MCF 10A (cell line): ENCODE measurements at regions of chr7 and their contacts with region 1.

Region 1: GRCh38 chr7:141014524-141015395 is at the start of gene MRPS33:
- DNase-seq: peak; percentile 95
- H3K4me3 Mint-ChIP-seq: peak within 1 kb of the TSS; percentile 85
- H3K27ac Mint-ChIP-seq: peak within 1 kb of the TSS; percentile 97
- H3K4me1 Mint-ChIP-seq: peaks cover 16% of the 10 kb centered on the region
- H3K27me3 Mint-ChIP-seq: peaks cover 20% of the 10 kb centered on the region
- CTCF ChIP-seq: peak; percentile 37
- total RNA-seq, gene MRPS33: 49.7 and 58.6 TPM in 2 replicates

Region 2: DNA sequence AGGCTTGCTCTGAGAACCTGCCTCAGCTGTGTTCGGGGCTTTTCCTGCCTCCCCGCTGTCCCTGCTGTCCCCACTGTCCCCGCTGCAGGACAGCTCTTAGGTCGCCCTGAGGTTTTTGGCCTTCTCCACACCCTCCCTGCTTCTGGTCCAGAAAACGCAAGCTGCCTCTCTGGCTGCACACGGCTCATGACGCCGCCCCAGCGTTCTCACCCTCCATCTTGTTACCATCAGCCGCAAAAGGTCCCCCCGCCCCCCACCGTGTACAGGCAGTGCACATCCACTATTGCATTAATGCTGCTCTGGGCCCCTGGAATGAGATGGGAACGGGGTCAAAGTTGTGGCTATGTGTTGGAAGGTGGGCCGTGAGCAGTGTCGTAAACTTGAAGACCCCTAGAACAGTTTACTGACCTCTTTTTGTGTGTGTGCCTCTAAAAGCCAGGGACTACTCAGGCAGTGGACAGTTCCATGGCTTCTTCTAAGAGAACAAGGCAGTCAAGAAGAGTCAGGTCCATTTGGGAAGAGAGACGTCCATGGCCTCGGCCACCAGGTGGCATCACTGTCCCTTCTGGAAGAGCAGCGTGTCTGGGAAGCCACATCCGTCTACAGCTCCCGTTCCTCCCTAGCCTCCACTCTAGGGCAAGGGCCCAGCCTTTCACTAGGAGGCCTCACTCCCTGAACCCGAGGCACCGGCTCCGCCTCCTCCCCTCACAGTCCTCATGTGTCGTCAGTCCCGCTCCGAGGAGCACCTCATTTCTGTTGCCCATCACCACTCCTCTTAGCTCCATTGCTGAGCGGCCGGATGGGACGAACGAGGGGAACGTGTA is 497.0 kb before region 1 on chr7:
- CTCF ChIA-PET with region 1: no interaction called
- POLR2A ChIA-PET with region 1: no interaction called
- intact Hi-C with region 1: loop called (anchors 1 kb)
- DNase-seq: peak; percentile 91
- H3K4me3 Mint-ChIP-seq: no peak overlapping the region
- H3K27ac Mint-ChIP-seq: no peak overlapping the region
- H3K4me1 Mint-ChIP-seq: peaks cover 6% of the 10 kb centered on the region
- H3K27me3 Mint-ChIP-seq: no peaks in the 10 kb centered on the region
- CTCF ChIP-seq: peak; percentile 81

Region 3: GRCh38 chr7:140673063-140673773 is 341.5 kb before region 1 on chr7:
- CTCF ChIA-PET with region 1: interaction called, 6 read pairs
- POLR2A ChIA-PET with region 1: interaction called, 4 read pairs
- intact Hi-C with region 1: loop called (anchors 5 kb)
- DNase-seq: peak; percentile 56
- H3K4me3 Mint-ChIP-seq: peak overlapping the region; percentile 87
- H3K27ac Mint-ChIP-seq: peak overlapping the region; percentile 79
- H3K4me1 Mint-ChIP-seq: peaks cover 14% of the 10 kb centered on the region
- H3K27me3 Mint-ChIP-seq: no peaks in the 10 kb centered on the region
- CTCF ChIP-seq: no peak

Region 4: DNA sequence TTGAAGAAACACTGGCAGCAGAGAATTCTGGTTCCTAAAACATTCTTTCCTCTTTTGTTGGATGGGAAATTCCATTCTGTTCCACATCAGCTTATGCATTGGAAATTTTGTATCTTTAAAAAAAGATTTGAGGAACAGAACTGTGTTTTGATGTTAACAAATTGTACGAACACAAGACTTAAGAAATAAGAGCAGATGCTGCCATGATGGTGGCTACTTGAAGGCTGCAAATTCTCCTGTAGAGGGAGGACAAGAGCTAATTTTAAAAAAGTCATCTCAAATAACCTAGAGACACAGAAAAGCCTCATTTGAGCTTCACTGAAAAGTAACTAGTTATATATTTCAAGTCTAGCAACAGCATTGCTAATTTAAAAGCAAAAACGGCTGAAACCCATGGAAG is 288.5 kb before region 1 on chr7:
- CTCF ChIA-PET with region 1: interaction called, 4 read pairs
- POLR2A ChIA-PET with region 1: no interaction called
- intact Hi-C with region 1: loop called (anchors 1 kb)
- DNase-seq: peak; percentile 18
- H3K4me3 Mint-ChIP-seq: no peak overlapping the region
- H3K27ac Mint-ChIP-seq: no peak overlapping the region
- H3K4me1 Mint-ChIP-seq: no peaks in the 10 kb centered on the region
- H3K27me3 Mint-ChIP-seq: no peaks in the 10 kb centered on the region
- CTCF ChIP-seq: peak; percentile 26

Region 5: GRCh38 chr7:140924019-140924820 is 90.5 kb before region 1 on chr7:
- CTCF ChIA-PET with region 1: interaction called, 4 read pairs
- POLR2A ChIA-PET with region 1: interaction called, 31 read pairs
- intact Hi-C with region 1: loop called (anchors 2 kb)
- DNase-seq: peak; percentile 58
- H3K4me3 Mint-ChIP-seq: no peak overlapping the region
- H3K27ac Mint-ChIP-seq: no peak overlapping the region
- H3K4me1 Mint-ChIP-seq: peaks cover 12% of the 10 kb centered on the region
- H3K27me3 Mint-ChIP-seq: no peaks in the 10 kb centered on the region
- CTCF ChIP-seq: peak; percentile 30

Region 6: DNA sequence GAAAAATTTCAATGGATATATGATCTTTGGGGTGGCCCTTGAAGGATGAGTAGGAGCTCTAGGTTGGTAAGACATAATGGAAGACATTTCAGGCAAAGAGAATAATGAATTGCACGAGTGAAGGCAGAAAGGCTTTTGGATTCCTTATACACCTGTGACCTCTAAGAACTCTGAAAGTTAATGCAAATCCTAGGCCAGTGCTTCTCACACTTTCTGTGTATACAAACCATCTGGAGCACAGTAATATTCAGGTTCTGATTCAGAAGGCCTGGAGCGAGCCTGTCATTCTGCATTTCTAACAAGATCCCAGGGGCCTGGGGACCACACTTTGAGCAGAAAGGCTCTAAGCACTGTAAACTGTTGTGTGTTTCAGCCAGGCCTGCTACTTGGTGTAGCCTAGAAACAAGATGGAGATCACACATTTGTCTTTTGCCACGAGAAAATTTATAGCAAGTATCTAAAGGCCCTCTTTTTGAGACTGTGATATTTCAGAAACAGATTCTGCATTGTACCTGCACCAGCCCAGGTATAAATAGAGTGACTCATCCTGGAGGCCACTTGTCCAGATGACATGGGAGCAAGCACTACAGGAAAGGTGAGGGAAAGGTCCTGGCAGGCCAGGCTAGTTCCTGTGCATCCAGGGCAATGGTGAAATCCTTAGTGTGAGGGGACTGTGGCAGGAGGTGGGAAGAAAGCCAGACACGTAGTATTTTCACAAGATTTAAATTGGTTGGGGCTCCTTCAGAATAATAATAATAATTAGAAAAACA is 24.4 kb before region 1 on chr7:
- CTCF ChIA-PET with region 1: no interaction called
- POLR2A ChIA-PET with region 1: no interaction called
- intact Hi-C with region 1: no loop called
- DNase-seq: no peak
- H3K4me3 Mint-ChIP-seq: no peak overlapping the region
- H3K27ac Mint-ChIP-seq: no peak overlapping the region
- H3K4me1 Mint-ChIP-seq: no peaks in the 10 kb centered on the region
- H3K27me3 Mint-ChIP-seq: no peaks in the 10 kb centered on the region
- CTCF ChIP-seq: no peak

Region 7: GRCh38 chr7:141042222-141043193 is 27.7 kb after region 1 on chr7:
- CTCF ChIA-PET with region 1: interaction called, 4 read pairs
- POLR2A ChIA-PET with region 1: interaction called, 10 read pairs
- intact Hi-C with region 1: no loop called
- DNase-seq: peak; percentile 38
- H3K4me3 Mint-ChIP-seq: no peak overlapping the region
- H3K27ac Mint-ChIP-seq: peak overlapping the region; percentile 65
- H3K4me1 Mint-ChIP-seq: peaks cover 8% of the 10 kb centered on the region
- H3K27me3 Mint-ChIP-seq: no peaks in the 10 kb centered on the region
- CTCF ChIP-seq: no peak

Region 8: GRCh38 chr7:141654551-141654950 is 639.8 kb after region 1 on chr7:
- CTCF ChIA-PET with region 1: interaction called, 17 read pairs
- POLR2A ChIA-PET with region 1: no interaction called
- intact Hi-C with region 1: loop called (anchors 1 kb)
- DNase-seq: peak; percentile 75
- H3K4me3 Mint-ChIP-seq: no peak overlapping the region
- H3K27ac Mint-ChIP-seq: no peak overlapping the region
- H3K4me1 Mint-ChIP-seq: peaks cover 5% of the 10 kb centered on the region
- H3K27me3 Mint-ChIP-seq: no peaks in the 10 kb centered on the region
- CTCF ChIP-seq: peak; percentile 47